ENCODE measurements at regions of chr4 and their contacts with region 1.

Region 1: GRCh38 chr4:64539234-64539849 is 130.1 kb upstream of the TECRL start:
- DNase-seq: peak; percentile 83
- H3K4me3 Mint-ChIP-seq: no peak overlapping the region
- H3K27ac Mint-ChIP-seq: no peak overlapping the region
- H3K4me1 Mint-ChIP-seq: no peaks in the 10 kb centered on the region
- H3K27me3 Mint-ChIP-seq: no peaks in the 10 kb centered on the region
- CTCF ChIP-seq: peak; percentile 53

Region 2: DNA sequence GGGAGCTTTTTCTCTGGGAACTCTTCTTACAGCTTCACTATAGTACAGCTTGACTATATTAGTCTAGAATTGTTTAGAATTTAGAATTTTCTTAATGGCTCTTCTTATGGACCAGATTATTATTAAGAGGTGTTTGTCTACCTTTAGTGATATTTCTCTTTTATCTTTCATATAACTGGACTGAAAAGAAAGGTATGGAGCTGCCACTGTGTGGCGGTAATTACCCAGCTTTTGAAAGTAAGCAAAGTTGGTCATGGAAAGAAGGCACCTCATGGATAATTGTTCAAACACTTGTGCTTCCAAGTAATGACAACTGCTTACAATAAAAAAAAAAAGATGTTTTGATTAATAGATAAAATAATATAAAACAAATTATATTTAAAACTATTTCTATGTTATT is 1242.6 kb before region 1 on chr4:
- CTCF ChIA-PET with region 1: interaction called, 4 read pairs
- POLR2A ChIA-PET with region 1: no interaction called
- intact Hi-C with region 1: loop called (anchors 2 kb)
- DNase-seq: peak; percentile 38
- H3K4me3 Mint-ChIP-seq: no peak overlapping the region
- H3K27ac Mint-ChIP-seq: no peak overlapping the region
- H3K4me1 Mint-ChIP-seq: no peaks in the 10 kb centered on the region
- H3K27me3 Mint-ChIP-seq: no peaks in the 10 kb centered on the region
- CTCF ChIP-seq: peak; percentile 31

Region 3: GRCh38 chr4:63528256-63528991 is 1010.9 kb before region 1 on chr4:
- CTCF ChIA-PET with region 1: interaction called, 5 read pairs
- POLR2A ChIA-PET with region 1: no interaction called
- intact Hi-C with region 1: loop called (anchors 1 kb)
- DNase-seq: peak; percentile 20
- H3K4me3 Mint-ChIP-seq: no peak overlapping the region
- H3K27ac Mint-ChIP-seq: no peak overlapping the region
- H3K4me1 Mint-ChIP-seq: no peaks in the 10 kb centered on the region
- H3K27me3 Mint-ChIP-seq: no peaks in the 10 kb centered on the region
- CTCF ChIP-seq: peak; percentile 44

Region 4: GRCh38 chr4:63717384-63717783 is 822.0 kb before region 1 on chr4:
- CTCF ChIA-PET with region 1: interaction called, 3 read pairs
- POLR2A ChIA-PET with region 1: no interaction called
- intact Hi-C with region 1: loop called (anchors 2 kb)
- DNase-seq: peak; percentile 48
- H3K4me3 Mint-ChIP-seq: no peak overlapping the region
- H3K27ac Mint-ChIP-seq: no peak overlapping the region
- H3K4me1 Mint-ChIP-seq: no peaks in the 10 kb centered on the region
- H3K27me3 Mint-ChIP-seq: no peaks in the 10 kb centered on the region
- CTCF ChIP-seq: peak; percentile 26

Region 5: GRCh38 chr4:64158648-64159326 is 380.6 kb before region 1 on chr4:
- CTCF ChIA-PET with region 1: interaction called, 19 read pairs
- POLR2A ChIA-PET with region 1: interaction called, 7 read pairs
- intact Hi-C with region 1: loop called (anchors 1 kb)
- DNase-seq: peak; percentile 82
- H3K4me3 Mint-ChIP-seq: peak overlapping the region; percentile 66
- H3K27ac Mint-ChIP-seq: peak overlapping the region; percentile 44
- H3K4me1 Mint-ChIP-seq: no peaks in the 10 kb centered on the region
- H3K27me3 Mint-ChIP-seq: no peaks in the 10 kb centered on the region
- CTCF ChIP-seq: peak; percentile 60

Region 6: DNA sequence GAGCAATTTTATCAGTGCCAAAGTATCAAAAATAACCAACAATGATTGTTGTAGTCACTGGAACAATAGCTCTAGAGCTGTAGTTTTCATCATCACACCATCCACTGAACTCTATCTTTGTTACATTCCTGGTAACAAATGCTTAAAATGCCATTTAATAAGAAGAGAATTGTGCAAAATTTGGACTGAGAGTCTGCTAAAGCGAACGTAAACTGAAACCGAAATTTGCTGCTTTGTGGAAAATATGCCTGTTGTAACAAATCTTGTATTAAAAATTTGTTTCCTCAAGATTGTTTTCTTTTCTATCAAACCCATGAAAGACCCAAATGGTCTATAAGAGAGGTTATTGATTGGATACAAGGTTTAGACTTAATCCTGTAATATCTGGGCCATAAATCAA is 20.7 kb before region 1 on chr4:
- CTCF ChIA-PET with region 1: no interaction called
- POLR2A ChIA-PET with region 1: no interaction called
- intact Hi-C with region 1: no loop called
- DNase-seq: no peak
- H3K4me3 Mint-ChIP-seq: no peak overlapping the region
- H3K27ac Mint-ChIP-seq: no peak overlapping the region
- H3K4me1 Mint-ChIP-seq: peaks cover 4% of the 10 kb centered on the region
- H3K27me3 Mint-ChIP-seq: no peaks in the 10 kb centered on the region
- CTCF ChIP-seq: no peak

Region 7: GRCh38 chr4:64584981-64585557 is 45.7 kb after region 1 on chr4:
- CTCF ChIA-PET with region 1: interaction called, 5 read pairs
- POLR2A ChIA-PET with region 1: no interaction called
- intact Hi-C with region 1: loop called (anchors 2 kb)
- DNase-seq: peak; percentile 55
- H3K4me3 Mint-ChIP-seq: no peak overlapping the region
- H3K27ac Mint-ChIP-seq: no peak overlapping the region
- H3K4me1 Mint-ChIP-seq: peaks cover 9% of the 10 kb centered on the region
- H3K27me3 Mint-ChIP-seq: no peaks in the 10 kb centered on the region
- CTCF ChIP-seq: peak; percentile 63

Region 8: GRCh38 chr4:64682946-64683345 is 143.6 kb after region 1 on chr4:
- CTCF ChIA-PET with region 1: no interaction called
- POLR2A ChIA-PET with region 1: no interaction called
- intact Hi-C with region 1: no loop called
- DNase-seq: no peak
- H3K4me3 Mint-ChIP-seq: no peak overlapping the region
- H3K27ac Mint-ChIP-seq: no peak overlapping the region
- H3K4me1 Mint-ChIP-seq: no peaks in the 10 kb centered on the region
- H3K27me3 Mint-ChIP-seq: no peaks in the 10 kb centered on the region
- CTCF ChIP-seq: no peak

Measured in MCF 10A (cell line).